GM12878 (cell line): ENCODE measurements at regions of chr2 and their contacts with region 1.

Region 1: DNA sequence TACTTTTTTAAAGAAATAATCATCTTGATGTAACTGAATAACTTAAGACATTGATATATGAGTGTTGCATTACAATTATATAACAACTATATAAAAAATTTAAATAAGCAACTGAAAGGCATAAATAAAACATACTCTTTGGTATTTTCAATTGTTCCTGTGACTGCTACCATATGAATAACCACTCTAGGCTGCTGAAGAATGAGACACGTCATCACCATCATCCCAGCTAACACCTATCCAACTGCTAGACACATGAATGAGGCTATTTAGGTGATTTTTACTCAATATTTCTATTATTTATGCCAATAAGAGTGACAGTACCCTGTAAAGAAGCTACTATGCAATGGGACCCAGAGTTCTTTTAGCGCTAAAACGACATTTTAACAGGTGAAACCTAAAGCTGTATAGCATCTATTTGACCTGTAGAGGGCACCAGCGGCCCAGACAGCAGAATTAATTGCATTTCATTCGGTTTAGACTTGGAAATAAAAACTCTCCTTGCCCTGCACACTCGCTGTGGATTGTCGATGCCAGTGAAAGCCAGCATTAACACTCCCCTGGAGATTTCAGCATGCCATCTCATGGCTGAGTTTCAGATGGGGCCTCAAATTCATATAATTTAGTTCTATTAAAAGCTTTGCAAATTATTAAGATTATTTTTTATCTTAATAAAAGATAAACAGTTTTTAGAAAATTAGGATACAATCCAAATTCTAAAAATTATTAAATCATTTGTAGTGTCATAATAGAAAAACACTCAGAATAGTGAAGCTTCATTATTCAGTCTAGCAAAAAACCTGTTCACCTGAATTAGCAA is 89.4 kb upstream of the MAP2 start:
- DNase-seq: no peak
- ATAC-seq: peak; percentile 85
- H3K4me3 ChIP-seq: no peak overlapping the region
- H3K27ac ChIP-seq: no peak overlapping the region
- H3K4me1 ChIP-seq: no peaks in the 10 kb centered on the region
- H3K27me3 ChIP-seq: no peaks in the 10 kb centered on the region
- CTCF ChIP-seq: peak; percentile 69 to 89 (median 83)
- EP300 ChIP-seq: no peak
- POLR2A ChIP-seq: no peak
- RAD21 ChIP-seq: peak; percentile 96

Region 2: GRCh38 chr2:208392300-208393080 is 941.9 kb before region 1 on chr2:
- CTCF ChIA-PET with region 1: interaction called, 4 read pairs
- POLR2A ChIA-PET with region 1: no interaction called
- RAD21 ChIA-PET with region 1: interaction called, 3 read pairs
- SMC1A ChIA-PET with region 1: interaction called, 3 read pairs
- in situ Hi-C with region 1: no loop called
- intact Hi-C with region 1: loop called (anchors 1 kb)
- DNase-seq: no peak
- ATAC-seq: no peak
- H3K4me3 ChIP-seq: no peak overlapping the region
- H3K27ac ChIP-seq: no peak overlapping the region
- H3K4me1 ChIP-seq: no peaks in the 10 kb centered on the region
- H3K27me3 ChIP-seq: no peaks in the 10 kb centered on the region
- CTCF ChIP-seq: no peak
- EP300 ChIP-seq: no peak
- POLR2A ChIP-seq: no peak
- RAD21 ChIP-seq: no peak

Region 3: DNA sequence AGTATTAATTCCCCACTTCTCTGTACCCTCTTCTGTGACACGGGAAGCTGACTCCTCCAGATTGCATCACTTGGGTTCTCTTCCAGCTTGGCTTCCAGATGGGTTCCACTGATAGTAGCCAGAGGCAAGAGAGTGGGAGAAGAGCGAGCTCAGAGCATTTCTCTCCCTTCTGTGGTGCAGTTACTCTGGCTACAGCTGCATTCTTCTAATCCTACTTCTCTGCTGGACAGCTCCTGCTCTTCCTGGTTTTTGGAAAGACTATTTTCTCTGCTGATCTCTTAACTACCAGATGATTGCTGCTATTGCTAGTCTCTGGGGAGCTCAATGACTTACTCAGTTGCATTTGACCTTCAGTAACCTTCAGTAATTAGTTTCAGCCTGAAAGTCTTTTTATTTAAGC is 98.0 kb before region 1 on chr2:
- CTCF ChIA-PET with region 1: no interaction called
- POLR2A ChIA-PET with region 1: no interaction called
- RAD21 ChIA-PET with region 1: no interaction called
- SMC1A ChIA-PET with region 1: no interaction called
- in situ Hi-C with region 1: no loop called
- intact Hi-C with region 1: no loop called
- DNase-seq: no peak
- ATAC-seq: no peak
- H3K4me3 ChIP-seq: no peak overlapping the region
- H3K27ac ChIP-seq: no peak overlapping the region
- H3K4me1 ChIP-seq: no peaks in the 10 kb centered on the region
- H3K27me3 ChIP-seq: no peaks in the 10 kb centered on the region
- CTCF ChIP-seq: no peak
- EP300 ChIP-seq: no peak
- POLR2A ChIP-seq: no peak
- RAD21 ChIP-seq: no peak

Region 4: DNA sequence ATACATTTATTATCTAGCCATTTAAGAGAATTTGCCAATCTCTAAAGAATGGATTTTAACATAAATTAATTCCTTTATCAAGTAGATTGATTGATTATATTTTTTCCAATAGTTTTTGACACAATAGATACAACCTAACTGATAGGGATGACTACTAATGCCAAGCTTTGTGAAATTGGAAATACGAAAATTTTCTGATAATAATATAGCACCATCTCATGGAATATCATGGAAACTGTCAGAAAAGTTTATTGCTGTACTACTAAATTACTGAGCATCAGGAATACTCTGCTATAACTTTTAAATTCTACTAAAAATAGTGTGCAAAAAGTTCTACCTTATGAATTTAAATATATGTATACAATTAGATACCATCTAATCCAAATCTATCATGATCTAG is 12.4 kb before region 1 on chr2:
- CTCF ChIA-PET with region 1: interaction called, 18 read pairs
- POLR2A ChIA-PET with region 1: no interaction called
- RAD21 ChIA-PET with region 1: no interaction called
- SMC1A ChIA-PET with region 1: no interaction called
- in situ Hi-C with region 1: no loop called
- intact Hi-C with region 1: no loop called
- DNase-seq: no peak
- ATAC-seq: no peak
- H3K4me3 ChIP-seq: no peak overlapping the region
- H3K27ac ChIP-seq: no peak overlapping the region
- H3K4me1 ChIP-seq: no peaks in the 10 kb centered on the region
- H3K27me3 ChIP-seq: no peaks in the 10 kb centered on the region
- CTCF ChIP-seq: no peak
- EP300 ChIP-seq: no peak
- POLR2A ChIP-seq: no peak
- RAD21 ChIP-seq: no peak

Region 5: GRCh38 chr2:209367091-209367747 is 32.8 kb after region 1 on chr2:
- CTCF ChIA-PET with region 1: interaction called, 17 read pairs
- POLR2A ChIA-PET with region 1: no interaction called
- RAD21 ChIA-PET with region 1: interaction called, 4 read pairs
- SMC1A ChIA-PET with region 1: interaction called, 3 read pairs
- in situ Hi-C with region 1: no loop called
- intact Hi-C with region 1: no loop called
- DNase-seq: no peak
- ATAC-seq: no peak
- H3K4me3 ChIP-seq: no peak overlapping the region
- H3K27ac ChIP-seq: no peak overlapping the region
- H3K4me1 ChIP-seq: no peaks in the 10 kb centered on the region
- H3K27me3 ChIP-seq: no peaks in the 10 kb centered on the region
- CTCF ChIP-seq: no peak
- EP300 ChIP-seq: no peak
- POLR2A ChIP-seq: no peak
- RAD21 ChIP-seq: no peak

Region 6: GRCh38 chr2:209473930-209474419 is 139.6 kb after region 1 on chr2:
- CTCF ChIA-PET with region 1: no interaction called
- POLR2A ChIA-PET with region 1: no interaction called
- RAD21 ChIA-PET with region 1: no interaction called
- SMC1A ChIA-PET with region 1: no interaction called
- in situ Hi-C with region 1: no loop called
- intact Hi-C with region 1: no loop called
- DNase-seq: no peak
- ATAC-seq: no peak
- H3K4me3 ChIP-seq: no peak overlapping the region
- H3K27ac ChIP-seq: no peak overlapping the region
- H3K4me1 ChIP-seq: no peaks in the 10 kb centered on the region
- H3K27me3 ChIP-seq: no peaks in the 10 kb centered on the region
- CTCF ChIP-seq: no peak
- EP300 ChIP-seq: no peak
- POLR2A ChIP-seq: no peak
- RAD21 ChIP-seq: no peak

Region 7: DNA sequence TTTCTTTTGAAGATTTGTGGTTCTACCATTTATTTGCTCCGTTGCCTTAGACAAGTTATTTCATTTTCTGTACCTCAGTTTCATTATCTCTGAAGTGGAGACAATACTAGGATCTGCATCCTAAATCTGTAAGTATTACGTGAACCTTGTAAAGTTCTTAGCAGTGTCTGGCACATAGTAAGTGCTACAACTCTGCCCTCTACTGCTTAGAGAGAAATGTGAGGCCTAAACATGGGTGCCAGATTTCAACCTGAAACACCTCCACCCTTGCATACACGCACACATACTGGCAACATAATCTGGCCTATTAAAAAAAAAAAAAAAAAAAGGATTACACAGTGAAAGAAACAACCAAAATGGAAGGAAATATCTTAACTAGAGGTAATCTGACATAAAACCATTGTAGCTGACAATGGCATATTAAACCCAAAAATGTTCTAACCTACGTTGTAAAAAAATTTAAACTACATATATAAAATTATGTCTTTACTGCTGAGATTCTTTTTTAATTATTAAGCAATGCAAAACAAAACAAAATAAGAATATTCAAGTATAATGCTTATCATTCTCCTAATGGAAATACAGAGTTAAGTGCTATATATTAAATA is 222.1 kb after region 1 on chr2:
- CTCF ChIA-PET with region 1: interaction called, 39 read pairs
- POLR2A ChIA-PET with region 1: no interaction called
- RAD21 ChIA-PET with region 1: interaction called, 7 read pairs
- SMC1A ChIA-PET with region 1: interaction called, 23 read pairs
- in situ Hi-C with region 1: no loop called
- intact Hi-C with region 1: loop called (anchors 1 kb)
- DNase-seq: no peak
- ATAC-seq: peak; percentile 74
- H3K4me3 ChIP-seq: no peak overlapping the region
- H3K27ac ChIP-seq: no peak overlapping the region
- H3K4me1 ChIP-seq: no peaks in the 10 kb centered on the region
- H3K27me3 ChIP-seq: no peaks in the 10 kb centered on the region; a peak in 1 of 4 replicates
- CTCF ChIP-seq: peak; percentile 23 to 49 (median 31); a peak in 4 of 6 replicates
- EP300 ChIP-seq: no peak
- POLR2A ChIP-seq: no peak
- RAD21 ChIP-seq: peak; percentile 71

Region 8: GRCh38 chr2:209960676-209961630 is 626.5 kb after region 1 on chr2:
- CTCF ChIA-PET with region 1: interaction called, 34 read pairs
- POLR2A ChIA-PET with region 1: no interaction called
- RAD21 ChIA-PET with region 1: interaction called, 14 read pairs
- SMC1A ChIA-PET with region 1: interaction called, 8 read pairs
- in situ Hi-C with region 1: loop called (anchors 10 kb)
- intact Hi-C with region 1: loop called (anchors 2 kb)
- DNase-seq: no peak
- ATAC-seq: peak; percentile 96
- H3K4me3 ChIP-seq: no peak overlapping the region
- H3K27ac ChIP-seq: no peak overlapping the region
- H3K4me1 ChIP-seq: no peaks in the 10 kb centered on the region
- H3K27me3 ChIP-seq: no peaks in the 10 kb centered on the region
- CTCF ChIP-seq: peak; percentile 58 to 72 (median 72)
- EP300 ChIP-seq: no peak
- POLR2A ChIP-seq: no peak
- RAD21 ChIP-seq: peak; percentile 68

Region 9: GRCh38 chr2:210224941-210225672 is 890.7 kb after region 1 on chr2 and contains the start of gene ACADL:
- CTCF ChIA-PET with region 1: no interaction called
- POLR2A ChIA-PET with region 1: no interaction called
- RAD21 ChIA-PET with region 1: no interaction called
- SMC1A ChIA-PET with region 1: no interaction called
- in situ Hi-C with region 1: loop called (anchors 25 kb)
- intact Hi-C with region 1: no loop called
- DNase-seq: no peak
- ATAC-seq: no peak; the same call in 2 of the 3 replicates
- H3K4me3 ChIP-seq: no peak within 1 kb of the TSS
- H3K27ac ChIP-seq: no peak within 1 kb of the TSS
- H3K4me1 ChIP-seq: no peaks in the 10 kb centered on the region
- H3K27me3 ChIP-seq: peaks cover 2 to 3% of the 10 kb centered on the region in 2 experiments
- CTCF ChIP-seq: no peak
- EP300 ChIP-seq: no peak
- POLR2A ChIP-seq: no peak
- RAD21 ChIP-seq: no peak
- polyA plus RNA-seq, gene ACADL: not detected